ENCODE measurements at regions of chr17 and their contacts with region 1.

Region 1: GRCh38 chr17:40362696-40363110 is 1.8 kb downstream of the GJD3 start:
- DNase-seq: peak in 6 of 7 donors; percentile 48 to 73 (median 63)
- H3K4me3 ChIP-seq: peak overlapping the region in 1 of 4 donors; percentile 57
- H3K27ac ChIP-seq: no peak overlapping the region
- H3K4me1 ChIP-seq: peaks cover 5 to 15% of the 10 kb centered on the region in 2 donors
- H3K27me3 ChIP-seq: peaks cover 15% of the 10 kb centered on the region
- CTCF ChIP-seq: peak in 5 of 6 experiments; percentile 16 to 36 (median 26)
- POLR2A ChIP-seq: no peak

Region 2: DNA sequence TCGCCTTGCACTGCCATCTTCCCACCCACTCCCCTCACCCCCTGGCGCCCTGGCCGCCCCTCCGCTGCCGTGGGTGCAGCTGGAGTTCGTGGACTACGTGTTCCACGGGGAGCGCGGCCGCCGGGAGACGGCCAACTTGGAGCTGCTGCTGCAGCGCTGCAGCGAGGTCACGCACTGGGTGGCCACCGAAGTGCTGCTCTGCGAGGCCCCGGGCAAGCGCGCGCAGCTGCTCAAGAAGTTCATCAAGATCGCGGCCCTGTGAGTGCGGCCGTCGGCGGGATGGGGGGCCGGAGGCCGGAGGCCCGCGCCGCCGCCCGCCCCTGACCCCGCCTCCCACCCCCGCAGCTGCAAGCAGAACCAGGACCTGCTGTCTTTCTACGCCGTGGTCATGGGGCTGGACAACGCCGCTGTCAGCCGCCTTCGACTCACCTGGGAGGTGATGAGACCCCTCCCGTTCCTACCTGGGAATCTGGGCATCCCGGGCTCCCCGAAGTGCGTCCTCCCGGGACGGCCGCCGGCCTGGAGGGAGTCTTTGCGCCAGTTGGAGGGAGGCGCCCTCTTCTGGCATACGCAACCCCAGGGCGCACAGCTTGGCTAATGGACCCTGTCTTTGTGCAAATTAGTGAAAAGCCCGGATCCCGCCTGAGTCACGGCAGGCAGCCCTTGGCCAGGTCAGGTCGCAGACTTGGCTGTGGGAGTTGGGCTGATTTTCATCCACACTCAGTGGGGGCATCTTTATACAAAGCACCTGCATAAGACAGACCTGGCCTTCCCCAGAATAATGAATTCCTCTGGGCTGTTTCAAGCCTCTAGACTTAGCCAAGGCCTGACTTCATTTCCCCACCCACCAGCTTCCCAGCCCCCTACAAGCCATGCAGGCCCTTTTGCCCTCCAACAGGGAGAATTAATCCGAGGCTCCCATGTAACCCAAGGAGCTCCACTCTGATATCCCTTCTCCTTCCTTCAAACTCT is 171.2 kb before region 1 on chr17:
- intact Hi-C with region 1: loop called in 1 of 2 experiments (anchors 10 kb)
- DNase-seq: peak; percentile 81 to 92 (median 87)
- H3K4me3 ChIP-seq: peak overlapping the region in 2 of 4 donors; percentile 41 to 60
- H3K27ac ChIP-seq: peak overlapping the region in 4 of 5 donors; percentile 52 to 90 (median 71)
- H3K4me1 ChIP-seq: peaks cover 4 to 13% of the 10 kb centered on the region in 2 donors
- H3K27me3 ChIP-seq: no peaks in the 10 kb centered on the region
- CTCF ChIP-seq: peak; percentile 40 to 58 (median 56)
- POLR2A ChIP-seq: peak in 1 of 2 donors; percentile 59

Region 3: GRCh38 chr17:40399185-40399584 is 36.5 kb after region 1 on chr17:
- intact Hi-C with region 1: no loop called
- DNase-seq: no peak
- H3K4me3 ChIP-seq: no peak overlapping the region
- H3K27ac ChIP-seq: no peak overlapping the region
- H3K4me1 ChIP-seq: no peaks in the 10 kb centered on the region
- H3K27me3 ChIP-seq: no peaks in the 10 kb centered on the region
- CTCF ChIP-seq: peak; percentile 26 to 67 (median 55)
- POLR2A ChIP-seq: no peak

Region 4: GRCh38 chr17:40410082-40410481 is 47.4 kb after region 1 on chr17:
- intact Hi-C with region 1: loop called (anchors 5 kb)
- DNase-seq: no peak
- H3K4me3 ChIP-seq: no peak overlapping the region
- H3K27ac ChIP-seq: no peak overlapping the region
- H3K4me1 ChIP-seq: no peaks in the 10 kb centered on the region
- H3K27me3 ChIP-seq: no peaks in the 10 kb centered on the region
- CTCF ChIP-seq: no peak
- POLR2A ChIP-seq: no peak

Region 5: GRCh38 chr17:40536295-40537171 is 173.8 kb after region 1 on chr17:
- intact Hi-C with region 1: loop called in 1 of 2 experiments (anchors 10 kb)
- DNase-seq: peak in 3 of 7 donors; percentile 37 to 45 (median 41)
- H3K4me3 ChIP-seq: no peak overlapping the region
- H3K27ac ChIP-seq: peak overlapping the region in 4 of 5 donors; percentile 17 to 97 (median 54)
- H3K4me1 ChIP-seq: peaks cover 17 to 42% of the 10 kb centered on the region in 2 donors
- H3K27me3 ChIP-seq: no peaks in the 10 kb centered on the region
- CTCF ChIP-seq: no peak
- POLR2A ChIP-seq: no peak